ENCODE measurements at regions of chr3 and their contacts with region 1.

Region 1: DNA sequence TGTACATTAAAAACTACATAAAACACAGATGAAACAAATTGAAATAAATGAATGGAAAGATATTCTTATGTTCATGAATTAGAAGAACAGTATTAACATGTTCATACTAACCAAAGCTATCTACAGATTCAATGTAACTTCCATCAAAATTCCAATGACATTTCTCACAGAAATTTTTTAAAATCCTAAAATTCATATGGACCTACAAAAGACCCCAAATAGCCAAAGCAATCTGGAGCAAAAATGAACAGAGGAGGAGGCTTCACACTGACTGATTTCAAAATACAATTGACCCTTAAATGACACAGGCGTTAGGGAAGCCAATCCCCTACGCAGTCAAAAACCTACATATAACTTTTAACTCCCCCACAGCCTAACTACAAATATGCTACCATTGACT is 39.4 kb downstream of the KPNA1 start:
- DNase-seq: no peak
- ATAC-seq: no peak
- H3K4me3 ChIP-seq: no peak overlapping the region
- H3K27ac ChIP-seq: no peak overlapping the region
- H3K4me1 ChIP-seq: peaks cover 13% of the 10 kb centered on the region
- H3K27me3 ChIP-seq: no peaks in the 10 kb centered on the region
- CTCF ChIP-seq: no peak

Region 2: DNA sequence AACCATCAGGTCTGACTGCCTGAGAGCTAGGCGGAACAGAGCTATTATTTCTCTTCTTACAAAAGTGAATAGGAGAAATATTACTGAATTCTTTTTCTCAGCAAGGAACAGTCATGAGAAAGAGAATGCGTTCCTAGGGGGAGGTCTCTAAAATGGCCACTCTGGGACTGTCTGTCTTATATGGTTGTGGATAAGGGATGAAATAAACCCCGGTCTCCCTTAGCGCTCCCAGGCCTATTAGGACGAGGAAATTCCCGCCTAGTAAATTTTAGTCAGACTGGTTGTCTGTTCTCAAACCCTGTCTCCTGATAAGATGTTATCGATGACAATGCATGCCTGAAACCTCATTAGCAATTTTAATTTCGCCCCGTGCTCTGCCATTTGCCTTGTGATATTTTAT is 39.4 kb before region 1 on chr3:
- intact Hi-C with region 1: loop called in 1 of 2 experiments (anchors 5 kb)
- DNase-seq: no peak
- ATAC-seq: no peak
- H3K4me3 ChIP-seq: no peak overlapping the region
- H3K27ac ChIP-seq: no peak overlapping the region
- H3K4me1 ChIP-seq: no peaks in the 10 kb centered on the region
- H3K27me3 ChIP-seq: no peaks in the 10 kb centered on the region
- CTCF ChIP-seq: no peak